ENCODE measurements at regions of chr2 and their contacts with region 1.

Region 1: DNA sequence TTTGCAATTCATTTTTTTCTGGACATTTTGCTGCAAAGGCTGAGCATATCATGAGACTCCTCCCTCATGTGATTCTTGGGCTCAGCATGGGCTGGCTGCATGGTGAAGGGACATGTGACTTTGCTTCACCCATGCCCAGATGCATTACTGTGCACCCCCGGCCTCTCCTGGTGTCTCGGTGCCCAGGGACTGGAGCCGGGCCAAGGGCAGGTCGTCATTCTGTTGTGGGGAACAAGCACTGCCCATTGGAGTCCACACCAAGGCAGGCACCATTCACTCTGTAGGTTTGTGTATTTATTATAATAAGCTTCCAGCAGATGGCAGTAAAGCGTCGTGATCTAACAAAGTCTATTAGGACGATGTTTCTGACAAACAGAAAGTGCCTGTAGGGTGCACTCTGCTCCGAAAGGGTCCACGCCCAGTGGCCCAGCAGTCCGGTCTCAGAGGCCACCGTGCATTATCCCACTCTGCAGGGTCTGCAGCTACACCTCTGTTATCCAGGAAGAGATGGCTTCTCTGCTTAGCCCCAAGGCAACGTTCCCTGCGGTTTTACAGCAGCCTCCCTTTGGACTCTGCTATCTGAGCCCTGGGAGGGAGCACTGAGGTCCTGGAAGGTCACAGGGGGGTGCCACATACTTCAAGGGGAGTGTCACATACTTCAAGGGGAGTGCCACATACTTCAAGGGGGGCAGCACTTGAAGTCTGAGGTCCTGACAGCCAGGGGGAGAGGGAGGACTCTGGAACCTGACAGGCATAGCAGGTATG is 219.6 kb downstream of the TSN start:
- DNase-seq: peak; percentile 35
- H3K4me3 ChIP-seq: peak overlapping the region in 3 of 4 donors; percentile 17 to 43 (median 19)
- H3K27ac ChIP-seq: no peak overlapping the region
- H3K4me1 ChIP-seq: peaks cover 0 to 7% (median 2%) of the 10 kb centered on the region in 4 donors
- H3K27me3 ChIP-seq: no peaks in the 10 kb centered on the region
- CTCF ChIP-seq: peak; percentile 53 to 59 (median 58)
- EP300 ChIP-seq: no peak
- POLR2A ChIP-seq: no peak

Region 2: GRCh38 chr2:122081751-122082150 is 106.7 kb after region 1 on chr2:
- in situ Hi-C with region 1: no loop called
- intact Hi-C with region 1: no loop called
- DNase-seq: no peak
- H3K4me3 ChIP-seq: no peak overlapping the region
- H3K27ac ChIP-seq: no peak overlapping the region
- H3K4me1 ChIP-seq: no peaks in the 10 kb centered on the region
- H3K27me3 ChIP-seq: no peaks in the 10 kb centered on the region
- CTCF ChIP-seq: no peak
- EP300 ChIP-seq: no peak
- POLR2A ChIP-seq: no peak

Region 3: DNA sequence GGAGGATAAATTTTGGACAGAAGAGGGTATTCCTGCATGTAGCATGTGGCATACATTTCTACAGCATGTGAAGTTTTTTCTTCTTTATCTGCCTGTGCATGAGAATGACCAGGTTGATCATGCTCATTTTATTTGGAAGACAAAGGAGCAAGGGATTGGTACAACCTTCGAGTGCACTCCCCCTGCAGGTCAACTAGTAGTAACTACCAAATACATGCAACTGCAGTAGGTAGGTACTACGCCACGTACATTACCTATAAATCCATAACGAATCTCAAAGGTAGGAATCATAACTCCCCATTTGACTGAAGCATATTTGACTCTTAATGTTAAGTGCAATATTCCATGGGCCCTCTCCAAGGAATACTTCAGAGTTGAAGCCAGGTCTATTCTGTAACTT is 544.3 kb after region 1 on chr2:
- in situ Hi-C with region 1: no loop called
- intact Hi-C with region 1: no loop called
- DNase-seq: no peak
- H3K4me3 ChIP-seq: no peak overlapping the region
- H3K27ac ChIP-seq: no peak overlapping the region
- H3K4me1 ChIP-seq: peaks cover 0 to 3% (median 0%) of the 10 kb centered on the region in 4 donors
- H3K27me3 ChIP-seq: no peaks in the 10 kb centered on the region
- CTCF ChIP-seq: peak in 1 of 5 experiments; percentile 13
- EP300 ChIP-seq: no peak
- POLR2A ChIP-seq: no peak

Region 4: DNA sequence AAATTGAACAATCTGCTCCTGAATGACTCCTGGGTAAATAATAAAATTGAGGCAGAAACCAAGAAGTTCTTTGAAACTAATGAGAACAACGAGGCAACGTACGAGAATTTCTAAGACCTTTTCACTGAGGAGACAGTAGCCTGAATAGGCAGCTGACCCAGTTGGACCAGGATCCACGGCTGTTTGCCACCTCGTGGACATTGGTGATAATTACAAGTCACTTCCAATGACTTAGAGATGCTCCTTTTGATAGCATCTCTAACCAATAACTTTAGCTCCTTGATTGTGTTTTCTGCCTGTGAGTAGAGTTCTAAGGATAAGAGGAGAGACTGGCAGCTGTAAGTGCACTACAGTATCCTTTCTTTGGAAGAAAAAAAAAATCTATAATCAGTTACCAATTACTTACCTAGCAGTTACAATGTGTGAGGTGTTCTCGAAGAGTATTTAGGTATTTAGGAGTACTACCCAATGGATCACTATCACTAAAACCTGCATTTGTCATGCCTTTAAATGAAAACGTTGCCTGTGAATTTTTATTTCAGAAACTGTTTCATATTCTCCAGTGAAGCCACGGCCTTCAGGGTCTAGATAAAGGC is 2018.7 kb after region 1 on chr2:
- in situ Hi-C with region 1: loop called in 1 of 4 experiments (anchors 25 kb)
- intact Hi-C with region 1: no loop called
- DNase-seq: peak; percentile 17
- H3K4me3 ChIP-seq: no peak overlapping the region
- H3K27ac ChIP-seq: no peak overlapping the region
- H3K4me1 ChIP-seq: no peaks in the 10 kb centered on the region
- H3K27me3 ChIP-seq: no peaks in the 10 kb centered on the region
- CTCF ChIP-seq: peak; percentile 30 to 49 (median 44)
- EP300 ChIP-seq: no peak
- POLR2A ChIP-seq: no peak

Measured in transverse colon (tissue), 4 donors.